ENCODE measurements at regions of chr19 and their contacts with region 1.

Region 1: GRCh38 chr19:13880059-13881043 is 3.4 kb downstream of the NANOS3 start:
- DNase-seq: peak; percentile 91 to 98
- H3K4me3 ChIP-seq: peak overlapping the region; percentile 19; the same call in 1 of the 2 replicates
- H3K27ac ChIP-seq: peak overlapping the region; percentile 63
- H3K4me1 ChIP-seq: peaks cover 16% of the 10 kb centered on the region
- H3K27me3 ChIP-seq: no peaks in the 10 kb centered on the region
- CTCF ChIP-seq: peak; percentile 100

Region 2: GRCh38 chr19:13731147-13731964 is 149.0 kb before region 1 on chr19:
- CTCF ChIA-PET with region 1: no interaction called
- POLR2A ChIA-PET with region 1: no interaction called
- intact Hi-C with region 1: no loop called
- DNase-seq: peak; percentile 94 to 97
- H3K4me3 ChIP-seq: peak overlapping the region; percentile 93
- H3K27ac ChIP-seq: peak overlapping the region; percentile 97
- H3K4me1 ChIP-seq: peaks cover 28% of the 10 kb centered on the region
- H3K27me3 ChIP-seq: no peaks in the 10 kb centered on the region
- CTCF ChIP-seq: no peak

Region 3: GRCh38 chr19:13861732-13862531 is 18.4 kb before region 1 on chr19:
- CTCF ChIA-PET with region 1: no interaction called
- POLR2A ChIA-PET with region 1: no interaction called
- intact Hi-C with region 1: no loop called
- DNase-seq: peak; percentile 85 to 95
- H3K4me3 ChIP-seq: peak overlapping the region; percentile 64
- H3K27ac ChIP-seq: peak overlapping the region; percentile 88
- H3K4me1 ChIP-seq: peaks cover 25% of the 10 kb centered on the region
- H3K27me3 ChIP-seq: no peaks in the 10 kb centered on the region
- CTCF ChIP-seq: peak; percentile 99

Region 4: GRCh38 chr19:13952154-13953035 is 72.0 kb after region 1 on chr19 and contains the start of gene DCAF15:
- CTCF ChIA-PET with region 1: no interaction called
- POLR2A ChIA-PET with region 1: no interaction called
- intact Hi-C with region 1: loop called (anchors 2 kb)
- DNase-seq: peak; percentile 99
- H3K4me3 ChIP-seq: peak within 1 kb of the TSS; percentile 82
- H3K27ac ChIP-seq: no peak within 1 kb of the TSS
- H3K4me1 ChIP-seq: peaks cover 6% of the 10 kb centered on the region
- H3K27me3 ChIP-seq: no peaks in the 10 kb centered on the region
- CTCF ChIP-seq: no peak
- total RNA-seq, gene DCAF15: 31.7 and 35.3 TPM in 2 replicates

Region 5: DNA sequence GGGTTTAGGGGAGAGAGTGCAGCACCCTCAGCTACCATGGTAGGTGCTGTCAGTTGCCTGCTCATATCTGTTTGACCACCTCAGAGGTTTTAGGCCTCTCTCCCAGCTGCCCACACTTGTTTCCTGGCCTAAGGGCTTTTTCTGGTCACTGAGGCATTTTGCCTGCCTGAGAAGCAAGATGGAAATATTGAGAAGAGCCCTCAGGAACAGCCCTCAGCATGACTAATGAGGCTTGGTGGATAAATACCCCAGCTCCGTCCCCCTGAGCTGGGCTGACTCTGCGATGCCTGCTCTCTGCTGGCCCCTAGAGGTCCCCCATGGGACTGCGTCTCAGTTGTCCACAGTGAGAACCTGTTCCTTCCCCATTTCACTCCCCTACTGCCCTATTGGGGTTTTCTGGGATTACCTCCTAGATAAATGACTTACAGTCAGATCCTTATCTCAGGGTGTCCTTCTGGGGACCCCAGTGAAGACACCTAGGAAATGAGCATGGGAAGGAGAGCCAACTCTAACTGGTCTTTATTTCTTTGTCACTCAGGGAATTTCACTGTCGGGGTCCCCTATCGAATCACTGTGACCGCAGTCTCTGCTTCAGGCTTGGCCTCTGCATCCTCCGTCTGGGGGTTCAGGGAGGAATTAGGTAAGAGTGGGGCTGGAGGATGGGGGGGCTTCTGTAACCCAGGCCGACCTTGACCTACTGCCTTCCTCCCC is 168.2 kb after region 1 on chr19:
- CTCF ChIA-PET with region 1: no interaction called
- POLR2A ChIA-PET with region 1: no interaction called
- intact Hi-C with region 1: loop called (anchors 1 kb)
- DNase-seq: peak; percentile 56 to 58
- H3K4me3 ChIP-seq: no peak overlapping the region
- H3K27ac ChIP-seq: no peak overlapping the region
- H3K4me1 ChIP-seq: no peaks in the 10 kb centered on the region
- H3K27me3 ChIP-seq: no peaks in the 10 kb centered on the region
- CTCF ChIP-seq: peak; percentile 95

Region 6: DNA sequence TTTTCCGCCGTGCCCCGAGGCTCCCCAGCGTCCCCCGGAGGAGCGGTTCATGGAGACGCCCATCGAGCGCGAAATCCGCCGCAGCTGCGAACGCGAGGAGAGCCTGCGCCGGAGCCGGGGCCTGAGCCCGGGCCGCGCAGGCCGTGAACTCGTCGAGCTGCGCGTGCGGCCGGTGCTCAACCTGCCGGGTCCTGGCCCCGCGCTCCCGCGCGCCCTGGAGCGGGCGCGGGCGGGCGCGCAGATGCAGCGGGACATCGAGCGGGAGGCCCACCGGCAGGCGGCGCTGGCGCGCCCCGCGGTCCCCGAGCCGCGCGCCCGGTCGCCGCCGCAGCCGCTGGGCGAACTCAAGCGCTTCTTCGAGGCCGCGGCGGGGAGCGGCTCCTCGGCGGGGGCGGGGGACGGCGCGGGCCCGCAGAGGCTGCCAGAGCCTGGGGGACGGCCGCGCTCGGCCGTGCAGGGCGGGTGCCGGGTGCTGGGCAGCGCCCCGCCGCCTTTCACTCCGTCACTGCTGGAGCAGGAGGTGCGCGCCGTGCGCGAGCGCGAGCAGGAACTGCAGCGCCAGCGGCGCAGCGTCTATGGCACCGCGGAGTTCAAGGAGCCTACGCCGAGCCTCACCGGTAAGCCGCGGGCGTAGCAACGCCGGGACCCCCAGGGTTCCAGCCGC is 193.0 kb after region 1 on chr19:
- CTCF ChIA-PET with region 1: interaction called, 6 read pairs
- POLR2A ChIA-PET with region 1: no interaction called
- intact Hi-C with region 1: loop called (anchors 1 kb)
- DNase-seq: peak; percentile 61 to 78
- H3K4me3 ChIP-seq: peak overlapping the region; percentile 72
- H3K27ac ChIP-seq: no peak overlapping the region
- H3K4me1 ChIP-seq: 0 out of 2 replicates have a peak, but pooled peaks cover 10% of the 10 kb centered on the region
- H3K27me3 ChIP-seq: no peaks in the 10 kb centered on the region
- CTCF ChIP-seq: no peak

Region 7: DNA sequence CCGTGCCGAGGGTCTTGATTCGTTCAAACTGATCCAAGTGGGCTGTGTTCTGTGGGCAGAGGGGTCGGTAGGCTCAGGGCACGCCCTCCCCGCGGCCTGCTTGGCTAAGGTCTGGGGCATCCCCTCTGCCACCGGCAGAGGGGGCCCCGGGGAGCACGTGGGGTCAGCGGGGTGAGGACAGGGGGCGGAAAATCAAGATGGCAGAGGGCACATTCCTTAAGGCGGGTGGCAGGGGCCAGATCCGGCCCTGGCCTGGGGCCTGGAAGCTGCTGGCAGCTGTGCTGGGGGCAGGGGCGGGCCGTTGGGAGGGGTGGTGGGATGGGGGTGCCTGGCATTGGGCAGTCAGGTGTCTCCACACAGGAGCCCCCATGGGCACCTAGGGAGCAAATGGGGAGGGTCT is 226.5 kb after region 1 on chr19:
- CTCF ChIA-PET with region 1: no interaction called
- POLR2A ChIA-PET with region 1: no interaction called
- intact Hi-C with region 1: no loop called
- DNase-seq: no peak
- H3K4me3 ChIP-seq: no peak overlapping the region
- H3K27ac ChIP-seq: no peak overlapping the region
- H3K4me1 ChIP-seq: peaks cover 13% of the 10 kb centered on the region
- H3K27me3 ChIP-seq: no peaks in the 10 kb centered on the region
- CTCF ChIP-seq: no peak

Region 8: DNA sequence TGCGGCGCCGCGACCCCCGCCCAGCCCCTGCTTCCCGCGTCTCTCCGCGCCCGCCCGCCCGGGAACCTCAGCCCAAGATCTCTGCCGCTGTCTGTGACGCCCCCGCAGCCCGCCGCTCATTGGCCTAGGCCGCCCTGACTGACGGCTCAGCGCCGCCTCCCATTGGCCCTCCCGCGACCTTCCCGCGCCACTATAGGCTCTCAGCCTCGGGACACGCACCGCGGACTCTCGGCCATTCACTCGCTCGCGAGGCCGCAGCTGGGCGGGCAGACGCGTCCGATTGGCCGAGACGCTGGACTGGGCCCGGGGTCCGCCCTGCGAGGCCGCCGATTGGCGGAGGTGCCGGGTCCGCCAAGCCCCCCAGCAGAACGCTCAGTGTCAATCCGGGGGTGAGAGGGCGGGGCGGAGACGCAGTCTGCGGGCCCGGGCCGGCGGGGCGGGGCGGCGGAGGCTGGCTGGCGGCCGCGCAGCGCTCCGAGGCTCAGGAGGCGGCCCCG is 237.4 kb after region 1 on chr19 and contains the start of gene PRKACA:
- CTCF ChIA-PET with region 1: no interaction called
- POLR2A ChIA-PET with region 1: no interaction called
- intact Hi-C with region 1: loop called (anchors 1 kb)
- DNase-seq: peak; percentile 97 to 99
- H3K4me3 ChIP-seq: peak within 1 kb of the TSS; percentile 82
- H3K27ac ChIP-seq: peak within 1 kb of the TSS; percentile 65
- H3K4me1 ChIP-seq: peaks cover 21% of the 10 kb centered on the region
- H3K27me3 ChIP-seq: no peaks in the 10 kb centered on the region
- CTCF ChIP-seq: no peak
- total RNA-seq, gene PRKACA: 62.0 and 82.8 TPM in 2 replicates

Region 9: DNA sequence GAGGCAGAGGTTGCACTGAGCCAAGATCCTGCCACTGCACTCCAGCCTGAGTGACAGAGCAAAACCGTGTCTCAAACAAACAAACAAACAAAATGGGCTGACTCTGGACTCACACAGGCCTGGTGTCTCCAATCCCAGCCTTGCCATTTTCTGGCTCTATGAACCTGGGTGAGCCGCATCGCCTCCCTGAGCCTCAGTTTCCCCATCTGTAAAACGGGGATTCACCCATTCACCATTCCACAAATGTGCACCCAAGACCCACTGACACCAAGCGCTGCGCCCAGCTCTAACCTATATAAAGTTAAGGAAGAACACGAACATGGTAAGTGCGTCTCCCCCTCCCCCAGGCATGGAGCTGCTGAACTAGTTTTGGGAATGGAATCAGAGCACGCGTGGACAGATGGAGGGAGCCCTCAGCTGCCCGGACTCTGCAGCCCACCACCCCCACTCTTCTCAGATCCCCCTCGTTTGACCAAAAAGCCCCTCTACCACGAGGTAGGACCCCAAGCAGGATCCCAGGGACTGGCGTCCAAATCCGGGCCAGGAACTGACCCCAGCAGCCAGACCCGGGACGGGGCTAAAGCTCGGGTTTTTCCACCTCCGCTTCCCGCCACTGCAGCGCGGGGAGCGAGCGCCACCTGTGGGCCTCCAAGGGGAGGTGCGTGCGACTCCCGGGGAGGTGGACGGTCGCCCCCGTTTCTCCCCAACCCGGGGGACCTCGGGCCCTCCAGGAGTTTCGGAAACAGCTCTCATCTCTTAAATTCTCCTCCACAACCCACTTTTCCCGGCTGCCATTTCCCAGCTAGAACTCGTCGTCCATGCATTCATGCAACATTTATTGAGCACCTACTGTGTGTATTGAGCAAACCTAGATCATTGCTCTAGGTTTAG is 467.9 kb after region 1 on chr19:
- CTCF ChIA-PET with region 1: interaction called, 5 read pairs
- POLR2A ChIA-PET with region 1: no interaction called
- intact Hi-C with region 1: loop called (anchors 1 kb)
- DNase-seq: peak in 1 of 2 experiments; percentile 65
- H3K4me3 ChIP-seq: peak overlapping the region; percentile 29; the same call in 1 of the 2 replicates
- H3K27ac ChIP-seq: no peak overlapping the region
- H3K4me1 ChIP-seq: no peaks in the 10 kb centered on the region
- H3K27me3 ChIP-seq: no peaks in the 10 kb centered on the region
- CTCF ChIP-seq: peak; percentile 99

Region 10: GRCh38 chr19:14405758-14406644 is 525.6 kb after region 1 on chr19:
- CTCF ChIA-PET with region 1: no interaction called
- POLR2A ChIA-PET with region 1: no interaction called
- intact Hi-C with region 1: loop called (anchors 2 kb)
- DNase-seq: peak; percentile 81 to 89
- H3K4me3 ChIP-seq: peak overlapping the region; percentile 37; the same call in 1 of the 2 replicates
- H3K27ac ChIP-seq: no peak overlapping the region
- H3K4me1 ChIP-seq: 0 out of 2 replicates have a peak, but pooled peaks cover 10% of the 10 kb centered on the region
- H3K27me3 ChIP-seq: no peaks in the 10 kb centered on the region
- CTCF ChIP-seq: peak; percentile 70